ENCODE measurements at regions of chr7 and their contacts with region 1.

Region 1: DNA sequence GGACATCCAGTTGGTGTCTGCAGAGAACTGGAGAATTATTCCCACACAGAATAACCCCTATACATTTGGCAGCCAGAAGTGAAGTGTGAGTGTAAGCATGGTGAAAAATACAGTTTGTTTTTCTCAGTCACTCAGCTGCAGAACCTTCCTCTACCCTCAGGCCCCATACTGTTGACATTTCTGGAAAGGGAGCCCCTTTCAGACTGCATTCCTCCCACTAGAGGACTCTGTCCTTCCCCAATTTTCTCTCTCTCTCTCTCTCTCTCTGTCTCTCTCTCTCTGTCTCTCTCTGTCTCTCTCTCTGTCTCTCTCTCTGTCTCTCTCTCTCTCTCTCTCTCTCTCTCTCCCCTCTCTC is 86.8 kb upstream of the STEAP1B start:
- DNase-seq: no peak
- H3K4me3 ChIP-seq: no peak overlapping the region
- H3K27me3 ChIP-seq: no peaks in the 10 kb centered on the region
- CTCF ChIP-seq: peak; percentile 63

Region 2: GRCh38 chr7:22601812-22602565 is 15.2 kb after region 1 on chr7:
- CTCF ChIA-PET with region 1: interaction called, 12 read pairs
- POLR2A ChIA-PET with region 1: no interaction called
- DNase-seq: no peak
- H3K4me3 ChIP-seq: no peak overlapping the region
- H3K27me3 ChIP-seq: no peaks in the 10 kb centered on the region
- CTCF ChIP-seq: no peak

Region 3: DNA sequence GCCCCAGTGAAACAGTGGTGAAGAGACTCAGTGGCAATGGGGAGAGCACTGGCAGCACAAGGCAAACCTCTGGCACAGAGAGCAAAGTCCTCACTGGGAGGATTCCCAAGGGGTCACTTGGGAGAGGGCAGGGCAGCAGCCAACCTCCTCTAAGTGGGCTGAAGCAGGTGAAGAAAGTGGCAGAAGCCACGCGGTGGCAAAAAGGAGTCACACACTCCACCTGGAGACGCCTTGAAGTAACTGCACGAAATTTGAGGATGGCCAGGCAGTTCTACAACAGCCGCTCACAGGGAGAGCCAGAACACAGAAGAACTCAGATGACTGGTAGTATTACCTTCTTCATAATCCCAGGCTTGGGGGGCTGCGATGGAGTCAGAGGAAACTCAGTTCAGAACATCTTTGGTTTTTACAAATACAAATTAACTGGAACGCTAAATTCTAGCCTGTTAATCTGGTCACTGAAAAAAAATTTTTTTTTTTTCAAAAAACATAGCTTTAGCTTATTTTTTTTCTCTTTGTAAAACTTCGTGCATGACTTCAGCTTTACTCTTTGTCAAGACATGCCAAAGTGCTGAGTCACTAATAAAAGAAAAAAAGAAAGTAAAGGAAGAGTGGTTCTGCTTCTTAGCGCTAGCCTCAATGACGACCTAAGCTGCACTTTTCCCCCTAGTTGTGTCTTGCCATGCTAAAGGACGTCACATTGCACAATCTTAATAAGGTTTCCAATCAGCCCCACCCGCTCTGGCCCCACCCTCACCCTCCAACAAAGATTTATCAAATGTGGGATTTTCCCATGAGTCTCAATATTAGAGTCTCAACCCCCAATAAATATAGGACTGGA is 139.8 kb after region 1 on chr7:
- CTCF ChIA-PET with region 1: interaction called, 23 read pairs
- POLR2A ChIA-PET with region 1: no interaction called
- DNase-seq: peak; percentile 79
- H3K4me3 ChIP-seq: peak overlapping the region; percentile 62
- H3K27me3 ChIP-seq: no peaks in the 10 kb centered on the region
- CTCF ChIP-seq: peak; percentile 68